Mammary epithelial cell (primary cell): ENCODE measurements at regions of chr5 and their contacts with region 1.

Region 1: DNA sequence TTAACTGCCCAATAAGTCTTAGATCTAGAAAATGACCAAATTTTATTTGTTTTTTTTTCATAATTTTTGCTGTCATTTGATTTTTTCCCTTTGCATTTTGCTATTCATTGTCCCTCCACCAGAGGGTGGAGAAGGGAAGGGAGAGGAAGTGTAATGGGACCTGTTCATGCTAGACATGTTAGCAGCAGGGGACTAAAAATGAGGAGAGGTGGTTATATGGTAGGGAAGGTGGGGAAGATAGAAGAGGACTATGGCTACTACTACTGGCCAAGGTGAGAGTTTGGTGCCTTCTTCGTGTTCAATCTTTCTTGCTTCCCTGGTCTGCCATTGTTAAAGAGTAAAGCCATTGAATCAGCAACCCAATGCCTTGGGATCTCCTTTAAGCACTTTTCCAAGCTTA is 6.4 kb downstream of the GRIA1 start:
- DNase-seq: peak; percentile 22
- H3K4me3 ChIP-seq: no peak overlapping the region
- H3K27ac ChIP-seq: no peak overlapping the region
- H3K4me1 ChIP-seq: no peaks in the 10 kb centered on the region
- H3K27me3 ChIP-seq: no peaks in the 10 kb centered on the region
- CTCF ChIP-seq: peak; percentile 79 to 93

Region 2: GRCh38 chr5:152560512-152561137 is 936.2 kb before region 1 on chr5:
- CTCF ChIA-PET with region 1: no interaction called
- dilution Hi-C with region 1: no loop called
- in situ Hi-C with region 1: no loop called
- intact Hi-C with region 1: loop called (anchors 1 kb)
- DNase-seq: peak; percentile 37
- H3K4me3 ChIP-seq: no peak overlapping the region
- H3K27ac ChIP-seq: no peak overlapping the region
- H3K4me1 ChIP-seq: no peaks in the 10 kb centered on the region
- H3K27me3 ChIP-seq: no peaks in the 10 kb centered on the region
- CTCF ChIP-seq: peak; percentile 91 to 94

Region 3: GRCh38 chr5:153629027-153629895 is 132.4 kb after region 1 on chr5:
- CTCF ChIA-PET with region 1: no interaction called
- dilution Hi-C with region 1: no loop called
- in situ Hi-C with region 1: no loop called
- intact Hi-C with region 1: loop called (anchors 1 kb)
- DNase-seq: peak; percentile 92
- H3K4me3 ChIP-seq: no peak overlapping the region
- H3K27ac ChIP-seq: peak overlapping the region; percentile 55
- H3K4me1 ChIP-seq: peaks cover 46% of the 10 kb centered on the region
- H3K27me3 ChIP-seq: no peaks in the 10 kb centered on the region
- CTCF ChIP-seq: peak; percentile 24 to 52

Region 4: GRCh38 chr5:153756540-153756939 is 259.7 kb after region 1 on chr5:
- CTCF ChIA-PET with region 1: no interaction called
- dilution Hi-C with region 1: no loop called
- in situ Hi-C with region 1: no loop called
- intact Hi-C with region 1: loop called (anchors 1 kb)
- DNase-seq: peak; percentile 14
- H3K4me3 ChIP-seq: no peak overlapping the region
- H3K27ac ChIP-seq: no peak overlapping the region
- H3K4me1 ChIP-seq: peaks cover 15% of the 10 kb centered on the region
- H3K27me3 ChIP-seq: no peaks in the 10 kb centered on the region
- CTCF ChIP-seq: peak; percentile 23 to 40

Region 5: GRCh38 chr5:153905219-153905618 is 408.4 kb after region 1 on chr5:
- CTCF ChIA-PET with region 1: no interaction called
- dilution Hi-C with region 1: no loop called
- in situ Hi-C with region 1: no loop called
- intact Hi-C with region 1: loop called (anchors 2 kb)
- DNase-seq: no peak
- H3K4me3 ChIP-seq: no peak overlapping the region
- H3K27ac ChIP-seq: no peak overlapping the region
- H3K4me1 ChIP-seq: peaks cover 15% of the 10 kb centered on the region
- H3K27me3 ChIP-seq: no peaks in the 10 kb centered on the region
- CTCF ChIP-seq: no peak